ENCODE measurements at regions of chr19 and their contacts with region 1.

Region 1: GRCh38 chr19:39390755-39391592 is at the starts of genes MED29 and PAF1:
- DNase-seq: peak; percentile 96 to 99 (median 98)
- ATAC-seq: peak; percentile 98
- H3K4me3 ChIP-seq: peak within 1 kb of the TSS; percentile 95
- H3K27ac ChIP-seq: peak within 1 kb of the TSS; percentile 99
- H3K4me1 ChIP-seq: peaks cover 11 to 14% of the 10 kb centered on the region in 2 experiments
- H3K27me3 ChIP-seq: no peaks in the 10 kb centered on the region
- CTCF ChIP-seq: peak in 2 of 3 experiments; percentile 15 to 25; a peak in 3 of 6 replicates
- EP300 ChIP-seq: peak; percentile 36
- POLR2A ChIP-seq: peak; percentile 96
- RAD21 ChIP-seq: peak in 1 of 2 experiments; percentile 26; a peak in 1 of 4 replicates
- polyA plus RNA-seq, gene MED29: 1.8 to 2.8 TPM
- polyA plus RNA-seq, gene PAF1: 1.5 to 1.7 TPM

Region 2: GRCh38 chr19:39265321-39265916 is 125.6 kb before region 1 on chr19:
- CTCF ChIA-PET with region 1: no interaction called
- POLR2A ChIA-PET with region 1: no interaction called
- in situ Hi-C with region 1: no loop called
- intact Hi-C with region 1: no loop called
- DNase-seq: peak in 1 of 4 experiments; percentile 22
- ATAC-seq: peak; percentile 32; the same call in 1 of the 3 replicates
- H3K4me3 ChIP-seq: no peak overlapping the region
- H3K27ac ChIP-seq: no peak overlapping the region
- H3K4me1 ChIP-seq: peaks cover 0 to 22% of the 10 kb centered on the region in 2 experiments; a peak in 1 of 5 replicates
- H3K27me3 ChIP-seq: no peaks in the 10 kb centered on the region; a peak in 1 of 5 replicates
- CTCF ChIP-seq: no peak
- EP300 ChIP-seq: no peak
- POLR2A ChIP-seq: no peak
- RAD21 ChIP-seq: no peak

Region 3: GRCh38 chr19:39329948-39330347 is 61.0 kb before region 1 on chr19:
- CTCF ChIA-PET with region 1: no interaction called
- POLR2A ChIA-PET with region 1: no interaction called
- in situ Hi-C with region 1: no loop called
- intact Hi-C with region 1: no loop called
- DNase-seq: no peak
- ATAC-seq: no peak
- H3K4me3 ChIP-seq: no peak overlapping the region
- H3K27ac ChIP-seq: no peak overlapping the region
- H3K4me1 ChIP-seq: peaks cover under 1 to 3% of the 10 kb centered on the region in 2 experiments; a peak in 2 of 5 replicates
- H3K27me3 ChIP-seq: no peaks in the 10 kb centered on the region
- CTCF ChIP-seq: no peak
- EP300 ChIP-seq: no peak
- POLR2A ChIP-seq: no peak
- RAD21 ChIP-seq: no peak

Region 4: GRCh38 chr19:39341719-39342604 is 49.0 kb before region 1 on chr19 and contains the start of gene SAMD4B:
- CTCF ChIA-PET with region 1: no interaction called
- POLR2A ChIA-PET with region 1: interaction called, 5 read pairs
- in situ Hi-C with region 1: no loop called
- intact Hi-C with region 1: loop called (anchors 2 kb)
- DNase-seq: peak; percentile 95 to 99 (median 97)
- ATAC-seq: peak; percentile 95
- H3K4me3 ChIP-seq: peak within 1 kb of the TSS; percentile 88
- H3K27ac ChIP-seq: peak within 1 kb of the TSS; percentile 93
- H3K4me1 ChIP-seq: peaks cover 20% of the 10 kb centered on the region in 2 experiments
- H3K27me3 ChIP-seq: no peaks in the 10 kb centered on the region
- CTCF ChIP-seq: peak; percentile 47 to 79 (median 78); a peak in 5 of 6 replicates
- EP300 ChIP-seq: peak; percentile 53; the same call in 1 of the 2 replicates
- POLR2A ChIP-seq: peak; percentile 94
- RAD21 ChIP-seq: peak in 1 of 2 experiments; percentile 26; a peak in 1 of 4 replicates
- polyA plus RNA-seq, gene SAMD4B: 3.4 to 5.9 TPM

Region 5: GRCh38 chr19:39379865-39380396 is 11.0 kb before region 1 on chr19:
- CTCF ChIA-PET with region 1: no interaction called
- POLR2A ChIA-PET with region 1: interaction called, 15 read pairs
- in situ Hi-C with region 1: no loop called
- intact Hi-C with region 1: no loop called
- DNase-seq: no peak
- ATAC-seq: no peak
- H3K4me3 ChIP-seq: no peak overlapping the region
- H3K27ac ChIP-seq: no peak overlapping the region
- H3K4me1 ChIP-seq: peaks cover 17 to 22% of the 10 kb centered on the region in 2 experiments
- H3K27me3 ChIP-seq: no peaks in the 10 kb centered on the region
- CTCF ChIP-seq: no peak
- EP300 ChIP-seq: no peak
- POLR2A ChIP-seq: no peak
- RAD21 ChIP-seq: no peak

Region 6: GRCh38 chr19:39403331-39404312 is 12.6 kb after region 1 on chr19:
- CTCF ChIA-PET with region 1: no interaction called
- POLR2A ChIA-PET with region 1: interaction called, 23 read pairs
- in situ Hi-C with region 1: no loop called
- intact Hi-C with region 1: no loop called
- DNase-seq: peak; percentile 59 to 91 (median 70)
- ATAC-seq: peak; percentile 51
- H3K4me3 ChIP-seq: peak overlapping the region; percentile 41
- H3K27ac ChIP-seq: peak overlapping the region; percentile 98
- H3K4me1 ChIP-seq: peaks cover 61 to 77% of the 10 kb centered on the region in 2 experiments
- H3K27me3 ChIP-seq: no peaks in the 10 kb centered on the region
- CTCF ChIP-seq: no peak
- EP300 ChIP-seq: no peak
- POLR2A ChIP-seq: peak; percentile 55; the same call in 1 of the 2 replicates
- RAD21 ChIP-seq: no peak

Region 7: GRCh38 chr19:39435499-39436349 is 44.8 kb after region 1 on chr19 and contains the start of gene RPS16:
- CTCF ChIA-PET with region 1: no interaction called
- POLR2A ChIA-PET with region 1: interaction called, 25 read pairs
- in situ Hi-C with region 1: no loop called
- intact Hi-C with region 1: no loop called
- DNase-seq: peak; percentile 95 to 99 (median 95)
- ATAC-seq: peak; percentile 88
- H3K4me3 ChIP-seq: peak within 1 kb of the TSS; percentile 100
- H3K27ac ChIP-seq: peak within 1 kb of the TSS; percentile 95
- H3K4me1 ChIP-seq: peaks cover 25 to 29% of the 10 kb centered on the region in 2 experiments
- H3K27me3 ChIP-seq: no peaks in the 10 kb centered on the region
- CTCF ChIP-seq: no peak
- EP300 ChIP-seq: no peak
- POLR2A ChIP-seq: peak; percentile 99
- RAD21 ChIP-seq: no peak
- polyA plus RNA-seq, gene RPS16: 2,545 to 3,175 TPM

Region 8: GRCh38 chr19:39445265-39446111 is 54.5 kb after region 1 on chr19 and contains the start of gene SUPT5H:
- CTCF ChIA-PET with region 1: no interaction called
- POLR2A ChIA-PET with region 1: interaction called, 3 read pairs
- in situ Hi-C with region 1: no loop called
- intact Hi-C with region 1: loop called (anchors 2 kb)
- DNase-seq: peak; percentile 95 to 99 (median 96)
- ATAC-seq: peak; percentile 99
- H3K4me3 ChIP-seq: peak within 1 kb of the TSS; percentile 71
- H3K27ac ChIP-seq: peak within 1 kb of the TSS; percentile 72
- H3K4me1 ChIP-seq: peaks cover 2 to 22% of the 10 kb centered on the region in 2 experiments; a peak in 3 of 5 replicates
- H3K27me3 ChIP-seq: no peaks in the 10 kb centered on the region
- CTCF ChIP-seq: peak in 1 of 3 experiments; percentile 28; a peak in 1 of 6 replicates
- EP300 ChIP-seq: peak; percentile 41; the same call in 1 of the 2 replicates
- POLR2A ChIP-seq: peak; percentile 88
- RAD21 ChIP-seq: no peak
- polyA plus RNA-seq, gene SUPT5H: 13.3 to 18.8 TPM

Measured in K562 (cell line).